IMR-90 (cell line): ENCODE measurements at regions of chr13 and their contacts with region 1.

Region 1: DNA sequence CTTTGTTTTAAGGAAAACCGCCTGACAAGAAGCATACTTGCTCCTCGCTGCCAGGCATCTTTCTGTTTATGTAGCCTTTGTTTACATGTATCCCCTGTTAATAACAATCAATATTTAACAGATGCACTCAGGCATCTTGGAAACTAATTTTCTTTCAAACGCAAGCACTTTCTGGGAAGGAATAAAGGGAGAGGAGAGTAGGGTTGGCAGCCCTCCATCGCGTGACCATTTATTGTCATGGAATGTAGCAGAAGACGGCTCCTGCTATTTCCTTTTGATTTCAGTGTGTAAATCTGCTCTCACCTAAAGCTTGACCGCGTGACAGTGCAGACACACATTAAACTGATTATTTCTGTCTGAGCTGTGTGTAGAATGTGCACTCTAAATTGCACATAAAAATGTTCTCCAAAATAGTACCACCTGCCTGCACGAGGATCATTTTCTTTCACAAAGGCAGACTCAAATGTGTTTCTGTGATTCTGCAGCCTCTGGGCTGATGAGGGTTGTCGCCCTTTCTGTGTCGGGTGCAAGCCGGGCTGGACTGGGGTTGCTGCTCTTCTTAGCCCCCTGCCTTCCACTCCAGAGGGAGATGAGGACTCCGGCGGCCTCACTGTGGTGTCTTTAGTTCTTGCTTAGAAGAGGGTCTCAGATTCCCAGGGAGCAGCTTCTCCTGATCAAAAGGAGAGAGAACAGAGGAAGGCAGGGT is 223.5 kb upstream of the MAB21L1 start:
- DNase-seq: peak; percentile 66
- ATAC-seq: peak; percentile 15
- H3K4me3 ChIP-seq: peak overlapping the region; percentile 19; the same call in 1 of the 2 replicates
- H3K27ac ChIP-seq: peak overlapping the region; percentile 92
- H3K4me1 ChIP-seq: peaks cover 36% of the 10 kb centered on the region
- H3K27me3 ChIP-seq: no peaks in the 10 kb centered on the region
- CTCF ChIP-seq: no peak
- POLR2A ChIP-seq: no peak
- RAD21 ChIP-seq: no peak

Region 2: GRCh38 chr13:35448465-35448864 is 251.5 kb before region 1 on chr13:
- CTCF ChIA-PET with region 1: no interaction called
- POLR2A ChIA-PET with region 1: no interaction called
- dilution Hi-C with region 1: no loop called
- in situ Hi-C with region 1: no loop called
- intact Hi-C with region 1: no loop called
- DNase-seq: no peak
- ATAC-seq: no peak
- H3K4me3 ChIP-seq: no peak overlapping the region
- H3K27ac ChIP-seq: no peak overlapping the region
- H3K4me1 ChIP-seq: no peaks in the 10 kb centered on the region
- H3K27me3 ChIP-seq: no peaks in the 10 kb centered on the region
- CTCF ChIP-seq: no peak
- POLR2A ChIP-seq: no peak
- RAD21 ChIP-seq: no peak

Region 3: DNA sequence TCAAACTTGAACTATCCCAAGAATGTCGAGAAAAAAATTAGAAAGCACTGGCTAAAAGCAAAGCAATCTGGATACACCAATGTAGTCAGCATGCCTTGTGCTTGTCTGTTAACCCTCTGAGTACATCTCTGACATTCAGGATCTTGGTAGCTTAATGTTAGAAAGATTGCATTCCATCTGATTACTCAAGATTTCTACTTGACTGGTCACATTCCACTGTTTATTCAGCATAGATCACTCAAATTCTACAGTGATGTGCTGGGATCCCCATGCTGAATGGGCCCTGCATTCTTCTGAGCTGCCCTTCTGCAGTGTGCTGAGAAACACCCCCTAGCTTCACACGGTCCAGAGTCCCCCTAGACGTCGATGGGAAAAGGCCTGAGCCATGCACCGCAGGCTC is 71.9 kb after region 1 on chr13:
- CTCF ChIA-PET with region 1: no interaction called
- POLR2A ChIA-PET with region 1: no interaction called
- dilution Hi-C with region 1: no loop called
- in situ Hi-C with region 1: no loop called
- intact Hi-C with region 1: loop called (anchors 2 kb)
- DNase-seq: peak; percentile 95
- ATAC-seq: peak; percentile 93
- H3K4me3 ChIP-seq: no peak overlapping the region
- H3K27ac ChIP-seq: peak overlapping the region; percentile 45
- H3K4me1 ChIP-seq: peaks cover 9% of the 10 kb centered on the region
- H3K27me3 ChIP-seq: no peaks in the 10 kb centered on the region
- CTCF ChIP-seq: no peak
- POLR2A ChIP-seq: no peak; the same call in 1 of the 2 replicates
- RAD21 ChIP-seq: 0 out of 2 replicates have a peak, but pooled peaks have one; percentile 3